Naive thymus-derived CD4-positive, alpha-beta T cell (primary cell): ENCODE measurements at regions of chr22 and their contacts with region 1.

Region 1: GRCh38 chr22:22463855-22464540 is 44.5 kb downstream of the ZNF280B start:
- DNase-seq: peak; percentile 10 to 55 (median 42)
- ATAC-seq: peak; percentile 44
- H3K4me3 ChIP-seq: no peak overlapping the region
- H3K4me3 Mint-ChIP-seq: no peak overlapping the region
- H3K27ac ChIP-seq: no peak overlapping the region
- H3K27ac Mint-ChIP-seq: no peak overlapping the region
- H3K4me1 ChIP-seq: no peaks in the 10 kb centered on the region
- H3K4me1 Mint-ChIP-seq: no peaks in the 10 kb centered on the region
- H3K27me3 ChIP-seq: peaks cover 0 to 11% of the 10 kb centered on the region in 2 donors
- H3K27me3 Mint-ChIP-seq: peaks cover 27 to 50% (median 48%) of the 10 kb centered on the region in 5 donors

Region 2: DNA sequence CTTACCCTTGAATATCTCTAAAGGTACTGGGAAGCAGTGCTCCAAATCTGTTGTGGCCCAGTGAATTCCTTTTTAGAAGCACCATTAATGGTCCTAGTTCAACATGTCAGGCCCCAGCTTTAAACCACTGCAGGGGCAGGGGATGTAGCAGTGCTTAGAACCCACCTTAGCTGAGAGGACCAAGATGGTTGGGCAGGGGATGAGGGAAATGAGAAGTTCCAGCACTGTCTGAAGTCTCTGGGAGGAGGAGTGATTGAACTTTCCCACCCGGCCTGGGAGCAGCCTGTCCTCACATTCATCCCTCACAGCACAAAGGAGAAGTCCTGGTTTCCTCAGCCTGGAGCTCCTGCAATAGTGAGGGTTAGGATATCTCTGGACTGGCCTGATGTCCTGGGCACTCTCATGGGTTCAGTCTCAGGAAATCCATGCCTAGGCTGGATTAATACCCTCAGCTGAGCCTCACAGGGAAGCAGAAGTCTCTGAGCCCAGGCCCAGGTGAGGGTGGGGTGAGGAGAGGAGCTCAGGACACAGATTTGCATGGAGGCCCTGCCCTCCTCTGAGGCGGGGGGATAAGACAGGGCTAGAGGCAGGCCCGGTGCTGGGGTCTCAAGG is 123.7 kb after region 1 on chr22:
- CTCF ChIA-PET with region 1: interaction called, 3 read pairs
- POLR2A ChIA-PET with region 1: no interaction called
- intact Hi-C with region 1: loop called (anchors 2 to 5 kb)
- DNase-seq: no peak
- ATAC-seq: no peak
- H3K4me3 ChIP-seq: no peak overlapping the region
- H3K4me3 Mint-ChIP-seq: no peak overlapping the region
- H3K27ac ChIP-seq: no peak overlapping the region
- H3K27ac Mint-ChIP-seq: no peak overlapping the region
- H3K4me1 ChIP-seq: no peaks in the 10 kb centered on the region
- H3K4me1 Mint-ChIP-seq: peaks cover 0 to 1% (median 0%) of the 10 kb centered on the region in 7 donors
- H3K27me3 ChIP-seq: no peaks in the 10 kb centered on the region
- H3K27me3 Mint-ChIP-seq: peaks cover 15 to 41% (median 19%) of the 10 kb centered on the region in 5 donors